Gastrocnemius medialis (tissue), 4 donors: ENCODE measurements at regions of chr5 and their contacts with region 1.

Region 1: GRCh38 chr5:79074641-79075040 is 5.1 kb downstream of the BHMT2 start:
- DNase-seq: no peak
- ATAC-seq: no peak
- H3K4me3 ChIP-seq: no peak overlapping the region
- H3K27ac ChIP-seq: no peak overlapping the region
- H3K4me1 ChIP-seq: no peaks in the 10 kb centered on the region
- H3K27me3 ChIP-seq: peaks cover 0 to 7% (median 0%) of the 10 kb centered on the region in 3 donors
- CTCF ChIP-seq: no peak
- POLR2A ChIP-seq: no peak

Region 2: DNA sequence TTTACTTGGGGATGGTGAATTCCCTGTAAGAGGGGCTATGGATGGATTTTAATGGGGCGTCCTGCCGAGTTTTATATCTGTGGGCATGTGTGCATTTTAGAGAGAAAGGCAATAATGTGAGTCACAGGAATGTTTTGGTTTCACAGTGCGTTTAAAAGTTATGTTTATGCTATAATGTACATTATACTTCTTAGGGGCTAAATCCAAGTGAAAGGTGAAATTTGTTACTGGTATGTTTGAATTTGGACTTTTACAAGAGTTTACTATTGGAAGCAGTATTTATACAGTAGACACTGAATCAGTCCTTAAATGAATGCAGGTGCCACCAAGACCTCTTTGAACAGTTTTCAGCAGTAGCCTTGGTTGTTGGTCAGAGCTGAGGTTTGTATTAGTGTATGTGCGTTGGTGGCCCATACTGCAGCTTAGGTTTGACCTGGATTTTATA is 166.9 kb after region 1 on chr5:
- in situ Hi-C with region 1: no loop called
- intact Hi-C with region 1: no loop called
- DNase-seq: no peak
- ATAC-seq: no peak
- H3K4me3 ChIP-seq: no peak overlapping the region
- H3K27ac ChIP-seq: no peak overlapping the region
- H3K4me1 ChIP-seq: peaks cover 68 to 78% of the 10 kb centered on the region in 2 donors
- H3K27me3 ChIP-seq: no peaks in the 10 kb centered on the region
- CTCF ChIP-seq: no peak
- POLR2A ChIP-seq: no peak

Region 3: DNA sequence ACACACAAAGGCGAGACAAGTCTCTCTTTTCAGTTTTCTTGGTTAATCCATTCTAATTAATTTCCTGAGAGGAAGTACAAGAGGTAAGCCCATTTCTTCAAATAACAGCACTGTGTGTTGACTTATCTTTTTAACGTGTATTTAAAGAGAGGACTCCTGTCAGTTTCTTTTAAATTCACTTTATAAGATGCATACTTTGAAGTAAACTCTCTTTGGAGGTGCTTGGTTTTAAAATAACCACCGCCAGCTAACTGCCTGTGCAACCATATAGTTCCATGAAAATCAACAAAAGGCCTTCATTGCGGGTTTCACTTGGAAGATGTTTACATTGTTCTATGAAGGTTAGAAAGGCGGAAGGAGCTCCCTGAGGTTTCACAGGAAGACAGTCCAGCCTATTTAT is 1194.3 kb after region 1 on chr5:
- in situ Hi-C with region 1: no loop called
- intact Hi-C with region 1: loop called (anchors 5 kb)
- DNase-seq: no peak
- ATAC-seq: no peak
- H3K4me3 ChIP-seq: no peak overlapping the region
- H3K27ac ChIP-seq: no peak overlapping the region
- H3K4me1 ChIP-seq: no peaks in the 10 kb centered on the region
- H3K27me3 ChIP-seq: no peaks in the 10 kb centered on the region
- CTCF ChIP-seq: no peak
- POLR2A ChIP-seq: no peak